Caco-2 (cell line): ENCODE measurements at regions of chr5 and their contacts with region 1.

Region 1: DNA sequence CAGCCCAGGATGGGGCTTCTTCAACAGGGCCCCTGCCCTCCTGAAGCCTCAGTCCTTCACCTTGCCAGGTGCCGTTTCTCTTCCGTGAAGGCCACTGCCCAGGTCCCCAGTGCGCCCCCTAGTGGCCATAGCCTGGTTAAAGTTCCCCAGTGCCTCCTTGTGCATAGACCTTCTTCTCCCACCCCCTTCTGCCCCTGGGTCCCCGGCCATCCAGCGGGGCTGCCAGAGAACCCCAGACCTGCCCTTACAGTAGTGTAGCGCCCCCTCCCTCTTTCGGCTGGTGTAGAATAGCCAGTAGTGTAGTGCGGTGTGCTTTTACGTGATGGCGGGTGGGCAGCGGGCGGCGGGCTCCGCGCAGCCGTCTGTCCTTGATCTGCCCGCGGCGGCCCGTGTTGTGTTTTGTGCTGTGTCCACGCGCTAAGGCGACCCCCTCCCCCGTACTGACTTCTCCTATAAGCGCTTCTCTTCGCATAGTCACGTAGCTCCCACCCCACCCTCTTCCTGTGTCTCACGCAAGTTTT is 23.6 kb downstream of the PCDHGC5 start:
- DNase-seq: peak; percentile 64 to 77
- H3K4me3 ChIP-seq: no peak overlapping the region
- H3K4me3 Mint-ChIP-seq: no peak overlapping the region
- H3K27ac Mint-ChIP-seq: peak overlapping the region; percentile 58
- H3K4me1 ChIP-seq: no peaks in the 10 kb centered on the region
- H3K4me1 Mint-ChIP-seq: no peaks in the 10 kb centered on the region
- H3K27me3 ChIP-seq: no peaks in the 10 kb centered on the region
- H3K27me3 Mint-ChIP-seq: no peaks in the 10 kb centered on the region
- CTCF ChIP-seq: peak; percentile 67 to 85

Region 2: DNA sequence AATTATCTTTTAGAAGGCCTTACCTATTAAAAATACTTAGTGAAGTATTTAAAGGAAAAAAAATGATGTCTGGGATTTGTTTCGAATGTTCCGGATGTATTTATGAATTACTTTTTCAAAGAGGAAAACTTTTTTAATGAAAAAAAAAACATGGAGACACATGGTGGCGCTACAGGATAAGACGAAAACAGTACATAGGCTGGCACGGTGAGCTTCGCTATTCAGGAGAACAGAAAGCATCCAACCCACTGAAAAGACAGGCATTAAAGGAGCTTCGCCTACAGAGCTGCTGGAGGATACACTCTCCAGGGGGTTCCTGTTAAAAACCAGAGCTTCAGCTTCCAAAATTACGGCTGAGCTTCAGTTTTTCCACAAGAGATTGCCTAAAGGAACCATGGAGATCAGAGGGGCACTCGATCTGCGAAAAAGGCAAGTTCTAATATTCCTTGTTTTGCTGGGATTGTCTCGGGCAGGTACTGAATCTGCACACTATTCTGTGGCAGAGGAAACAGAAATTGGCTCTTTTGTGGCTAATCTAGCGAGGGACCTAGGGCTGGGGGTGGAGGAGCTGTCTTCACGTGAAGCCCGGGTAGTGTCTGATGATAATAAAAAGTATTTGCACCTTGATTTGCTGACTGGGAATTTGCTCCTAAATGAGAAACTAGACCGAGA is 289.2 kb before region 1 on chr5 and contains the start of gene PCDHB14:
- CTCF ChIA-PET with region 1: no interaction called
- POLR2A ChIA-PET with region 1: no interaction called
- intact Hi-C with region 1: no loop called
- DNase-seq: peak in 1 of 2 experiments; percentile 28
- H3K4me3 ChIP-seq: peak within 1 kb of the TSS; percentile 32
- H3K4me3 Mint-ChIP-seq: peak within 1 kb of the TSS; percentile 58
- H3K27ac Mint-ChIP-seq: no peak within 1 kb of the TSS
- H3K4me1 ChIP-seq: no peaks in the 10 kb centered on the region
- H3K4me1 Mint-ChIP-seq: no peaks in the 10 kb centered on the region
- H3K27me3 ChIP-seq: no peaks in the 10 kb centered on the region
- H3K27me3 Mint-ChIP-seq: no peaks in the 10 kb centered on the region
- CTCF ChIP-seq: peak; percentile 21 to 29
- total RNA-seq, gene PCDHB14: 0.41 and 0.44 TPM in 2 replicates

Region 3: DNA sequence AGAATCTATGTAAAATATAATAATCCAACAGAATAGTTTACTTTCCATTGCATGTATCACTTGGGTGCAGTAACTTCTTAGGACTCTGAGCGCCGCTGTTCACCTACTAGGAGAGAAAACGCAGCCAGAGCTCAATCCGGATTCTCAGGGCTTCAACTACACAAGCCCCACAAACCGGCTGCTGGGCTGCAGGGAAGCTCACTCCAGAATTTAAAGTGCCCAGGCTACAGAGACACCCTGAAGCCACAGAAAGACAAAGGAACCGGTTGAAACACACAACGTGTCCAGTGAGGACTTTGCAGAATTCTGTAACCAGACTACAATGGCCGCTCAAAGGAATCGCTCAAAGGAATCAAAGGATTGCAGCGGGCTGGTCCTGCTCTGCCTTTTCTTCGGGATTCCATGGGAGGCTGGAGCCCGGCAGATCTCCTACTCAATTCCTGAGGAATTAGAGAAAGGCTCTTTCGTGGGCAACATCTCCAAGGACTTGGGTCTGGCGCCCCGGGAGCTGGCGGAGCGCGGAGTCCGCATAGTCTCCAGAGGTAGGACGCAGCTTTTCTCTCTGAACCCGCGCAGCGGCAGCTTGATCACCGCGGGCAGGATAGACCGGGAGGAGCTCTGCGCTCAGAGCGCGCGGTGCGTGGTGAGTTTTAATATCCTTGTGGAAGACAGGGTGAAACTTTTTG is 99.5 kb before region 1 on chr5 and contains the start of gene PCDHGA10:
- CTCF ChIA-PET with region 1: interaction called, 4 read pairs
- POLR2A ChIA-PET with region 1: no interaction called
- intact Hi-C with region 1: loop called (anchors 2 kb)
- DNase-seq: peak in 1 of 2 experiments; percentile 50
- H3K4me3 ChIP-seq: peak within 1 kb of the TSS; percentile 49
- H3K4me3 Mint-ChIP-seq: peak within 1 kb of the TSS; percentile 86
- H3K27ac Mint-ChIP-seq: no peak within 1 kb of the TSS
- H3K4me1 ChIP-seq: no peaks in the 10 kb centered on the region
- H3K4me1 Mint-ChIP-seq: no peaks in the 10 kb centered on the region
- H3K27me3 ChIP-seq: no peaks in the 10 kb centered on the region
- H3K27me3 Mint-ChIP-seq: no peaks in the 10 kb centered on the region
- CTCF ChIP-seq: peak; percentile 50 to 55
- total RNA-seq, gene PCDHGA10: 2.9 and 3.6 TPM in 2 replicates

Region 4: GRCh38 chr5:141465351-141465750 is 47.1 kb before region 1 on chr5:
- CTCF ChIA-PET with region 1: no interaction called
- POLR2A ChIA-PET with region 1: no interaction called
- intact Hi-C with region 1: no loop called
- DNase-seq: no peak
- H3K4me3 ChIP-seq: no peak overlapping the region
- H3K4me3 Mint-ChIP-seq: no peak overlapping the region
- H3K27ac Mint-ChIP-seq: no peak overlapping the region
- H3K4me1 ChIP-seq: no peaks in the 10 kb centered on the region
- H3K4me1 Mint-ChIP-seq: no peaks in the 10 kb centered on the region
- H3K27me3 ChIP-seq: no peaks in the 10 kb centered on the region
- H3K27me3 Mint-ChIP-seq: no peaks in the 10 kb centered on the region
- CTCF ChIP-seq: no peak

Region 5: DNA sequence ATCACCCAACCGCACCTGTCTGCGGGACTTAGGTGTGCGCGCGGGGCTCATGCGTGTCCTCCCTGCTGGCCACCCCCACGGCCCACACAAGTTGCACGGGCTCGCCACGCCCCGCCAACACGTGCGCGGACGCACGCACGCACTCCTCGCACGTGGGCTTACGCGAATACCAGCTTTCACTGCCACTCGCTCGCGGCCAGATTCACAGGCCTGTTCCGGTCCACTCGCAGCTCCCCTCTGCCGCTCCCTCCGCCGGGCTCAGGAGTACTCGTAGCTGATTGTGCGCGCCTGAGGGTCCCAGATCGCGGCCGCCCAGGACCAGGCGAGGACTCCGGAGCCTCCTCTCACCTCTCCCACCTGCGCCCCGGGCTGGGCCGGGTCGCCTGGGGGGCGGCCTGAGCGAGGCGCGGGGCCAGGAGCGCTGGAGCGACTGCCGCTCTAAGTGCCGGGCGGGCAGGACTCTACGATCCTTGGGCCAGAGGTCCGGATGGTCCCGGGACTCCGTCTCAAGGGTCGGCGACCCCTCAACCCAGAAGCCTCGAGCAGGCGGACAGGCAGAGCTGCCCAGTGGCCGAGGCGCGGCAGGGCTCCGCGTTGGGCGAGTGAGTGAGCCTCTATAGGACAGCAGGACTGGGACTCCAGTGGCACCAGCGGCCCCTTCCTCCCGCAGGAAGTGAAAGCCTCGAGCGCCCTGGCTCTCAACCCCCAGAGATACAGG is 20.1 kb before region 1 on chr5:
- CTCF ChIA-PET with region 1: no interaction called
- POLR2A ChIA-PET with region 1: no interaction called
- intact Hi-C with region 1: no loop called
- DNase-seq: no peak
- H3K4me3 ChIP-seq: no peak overlapping the region
- H3K4me3 Mint-ChIP-seq: no peak overlapping the region
- H3K27ac Mint-ChIP-seq: no peak overlapping the region
- H3K4me1 ChIP-seq: no peaks in the 10 kb centered on the region
- H3K4me1 Mint-ChIP-seq: peaks cover 7% of the 10 kb centered on the region
- H3K27me3 ChIP-seq: no peaks in the 10 kb centered on the region
- H3K27me3 Mint-ChIP-seq: peaks cover 6% of the 10 kb centered on the region
- CTCF ChIP-seq: no peak

Region 6: GRCh38 chr5:141534492-141535211 is 22.2 kb after region 1 on chr5:
- CTCF ChIA-PET with region 1: interaction called, 11 read pairs
- POLR2A ChIA-PET with region 1: no interaction called
- intact Hi-C with region 1: no loop called
- DNase-seq: no peak
- H3K4me3 ChIP-seq: no peak overlapping the region
- H3K4me3 Mint-ChIP-seq: no peak overlapping the region
- H3K27ac Mint-ChIP-seq: no peak overlapping the region
- H3K4me1 ChIP-seq: no peaks in the 10 kb centered on the region
- H3K4me1 Mint-ChIP-seq: peaks cover 6% of the 10 kb centered on the region
- H3K27me3 ChIP-seq: no peaks in the 10 kb centered on the region
- H3K27me3 Mint-ChIP-seq: no peaks in the 10 kb centered on the region
- CTCF ChIP-seq: no peak